GM13976 (cell line): ENCODE measurements at regions of chr16 and their contacts with region 1.

Region 1: DNA sequence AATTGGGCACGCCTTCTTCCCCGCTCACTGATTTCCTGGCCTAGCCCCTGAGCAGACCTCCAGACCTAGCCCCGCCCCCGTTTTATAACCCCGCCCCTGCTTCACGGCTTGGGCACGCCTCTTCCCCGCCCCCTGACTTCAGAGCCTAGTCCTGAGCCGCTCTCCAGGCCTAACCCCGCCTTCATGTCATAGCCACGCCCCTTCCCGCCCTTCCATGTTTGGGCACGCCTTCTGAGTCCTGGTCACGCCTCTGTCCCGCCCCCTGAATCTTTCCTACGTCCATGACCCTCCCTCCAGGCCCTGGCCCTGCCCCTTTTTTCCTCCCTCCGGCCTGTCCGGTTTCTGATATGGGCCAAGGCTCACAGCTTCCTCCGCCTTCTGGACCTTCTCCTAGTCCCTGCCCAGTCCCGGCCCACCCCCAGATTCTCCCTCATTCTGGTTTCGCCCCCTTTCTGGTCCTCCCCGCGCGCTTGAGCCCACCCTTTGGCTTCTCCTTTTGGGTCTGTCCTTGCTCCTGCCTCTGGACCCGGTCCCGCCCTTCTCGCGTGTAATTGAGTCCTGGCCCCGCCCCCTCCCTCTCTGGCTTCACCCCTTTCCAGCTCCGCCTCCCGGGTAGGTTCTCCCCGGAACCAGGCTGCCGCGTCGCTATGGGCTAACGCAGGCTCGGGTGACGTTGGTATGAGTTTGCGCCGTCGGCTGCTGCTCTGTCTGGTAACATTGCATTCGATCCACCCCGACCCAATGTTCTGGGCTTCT is 15.1 kb upstream of the EEF2K start:
- DNase-seq: peak; percentile 95
- CTCF ChIP-seq: no peak

Region 2: DNA sequence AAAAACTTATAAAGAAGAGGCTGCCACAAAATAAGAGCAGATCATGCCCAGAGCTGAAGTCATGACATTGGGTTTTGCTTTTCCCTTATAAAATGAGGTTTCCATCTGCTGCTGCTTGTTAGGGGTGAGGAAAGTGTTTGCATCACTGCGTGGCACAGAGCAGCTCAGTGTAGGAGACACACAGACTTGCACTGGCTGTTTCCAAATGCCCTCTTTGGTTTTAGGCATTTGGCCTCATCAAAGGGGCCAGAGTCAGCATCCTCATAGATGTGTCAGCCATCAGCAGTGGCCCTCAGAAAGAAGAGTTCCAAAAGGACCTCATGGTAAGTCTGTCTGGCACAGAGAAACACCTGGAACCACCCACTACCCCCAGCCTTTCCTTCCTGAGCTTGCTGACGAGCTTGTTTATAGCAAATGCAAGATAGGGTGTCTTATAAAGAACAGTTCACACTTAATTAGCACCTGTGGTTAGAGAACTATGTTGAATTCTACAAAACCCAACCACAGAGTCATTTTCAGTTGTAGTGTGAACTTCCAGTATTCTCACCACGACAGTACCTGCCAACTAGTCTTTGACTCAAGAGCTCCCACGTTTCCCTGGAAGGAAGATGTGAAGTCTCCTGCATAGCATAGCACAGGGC is 81.6 kb before region 1 on chr16:
- in situ Hi-C with region 1: loop called (anchors 10 kb)
- DNase-seq: no peak
- CTCF ChIP-seq: no peak

Region 3: GRCh38 chr16:22291860-22292692 is 101.1 kb after region 1 on chr16:
- in situ Hi-C with region 1: loop called (anchors 5 kb)
- DNase-seq: no peak
- CTCF ChIP-seq: no peak